Activated T-helper 2 cell treated with anti-CD3 and anti-CD28 coated beads, Interferon-gamma antibody, Interleukin-2, Interleukin-4, amounts not matched to agents 10 μg/mL and 5 μg/mL and 100 μg/mL, durations not matched to agents 14 hours and 24 hours and 36 hours (primary cell): ENCODE measurements at regions of chr6 and their contacts with region 1.

Region 1: GRCh38 chr6:146857180-146857979 is 258.6 kb downstream of the ADGB start:
- DNase-seq: peak; percentile 63
- H3K4me3 Mint-ChIP-seq: no peak overlapping the region
- H3K27ac Mint-ChIP-seq: peak overlapping the region; percentile 72
- H3K4me1 Mint-ChIP-seq: peaks cover 34% of the 10 kb centered on the region
- H3K27me3 Mint-ChIP-seq: no peaks in the 10 kb centered on the region

Region 2: GRCh38 chr6:146803601-146804000 is 53.8 kb before region 1 on chr6:
- intact Hi-C with region 1: no loop called
- DNase-seq: no peak
- H3K4me3 Mint-ChIP-seq: no peak overlapping the region
- H3K27ac Mint-ChIP-seq: no peak overlapping the region
- H3K4me1 Mint-ChIP-seq: peaks cover 4% of the 10 kb centered on the region
- H3K27me3 Mint-ChIP-seq: no peaks in the 10 kb centered on the region

Region 3: GRCh38 chr6:146876271-146877151 is 19.1 kb after region 1 on chr6:
- intact Hi-C with region 1: loop called (anchors 1 kb)
- DNase-seq: no peak
- H3K4me3 Mint-ChIP-seq: no peak overlapping the region
- H3K27ac Mint-ChIP-seq: peak overlapping the region; percentile 85
- H3K4me1 Mint-ChIP-seq: peaks cover 27% of the 10 kb centered on the region
- H3K27me3 Mint-ChIP-seq: no peaks in the 10 kb centered on the region

Region 4: DNA sequence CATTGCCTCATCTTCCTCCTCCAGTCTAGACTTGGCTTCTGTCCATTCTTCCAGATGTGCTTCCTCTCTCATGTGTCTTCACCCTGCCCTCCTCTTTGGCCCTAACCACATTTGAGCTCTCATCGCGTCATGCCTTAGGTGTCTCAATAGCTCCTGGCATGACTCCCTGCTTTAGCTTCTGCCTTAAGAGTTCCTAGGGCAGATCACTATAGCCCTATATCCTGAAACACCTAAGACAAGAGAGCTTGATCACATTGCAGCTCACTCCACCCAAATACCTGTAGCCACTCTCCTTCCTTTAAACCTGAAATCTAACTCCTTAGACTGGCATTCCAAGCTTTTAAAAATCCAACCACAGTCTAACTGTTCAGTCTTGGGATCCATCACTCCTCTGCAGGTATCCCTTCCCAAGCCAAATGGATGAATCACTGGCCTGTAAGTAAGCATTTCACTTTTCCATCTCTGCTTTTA is 277.9 kb after region 1 on chr6:
- intact Hi-C with region 1: loop called (anchors 10 kb)
- DNase-seq: no peak
- H3K4me3 Mint-ChIP-seq: no peak overlapping the region
- H3K27ac Mint-ChIP-seq: no peak overlapping the region
- H3K4me1 Mint-ChIP-seq: peaks cover 14% of the 10 kb centered on the region
- H3K27me3 Mint-ChIP-seq: no peaks in the 10 kb centered on the region

Region 5: GRCh38 chr6:147268254-147268653 is 410.9 kb after region 1 on chr6:
- intact Hi-C with region 1: loop called (anchors 1 kb)
- DNase-seq: no peak
- H3K4me3 Mint-ChIP-seq: no peak overlapping the region
- H3K27ac Mint-ChIP-seq: peak overlapping the region; percentile 77
- H3K4me1 Mint-ChIP-seq: peaks cover 15% of the 10 kb centered on the region
- H3K27me3 Mint-ChIP-seq: no peaks in the 10 kb centered on the region

Region 6: DNA sequence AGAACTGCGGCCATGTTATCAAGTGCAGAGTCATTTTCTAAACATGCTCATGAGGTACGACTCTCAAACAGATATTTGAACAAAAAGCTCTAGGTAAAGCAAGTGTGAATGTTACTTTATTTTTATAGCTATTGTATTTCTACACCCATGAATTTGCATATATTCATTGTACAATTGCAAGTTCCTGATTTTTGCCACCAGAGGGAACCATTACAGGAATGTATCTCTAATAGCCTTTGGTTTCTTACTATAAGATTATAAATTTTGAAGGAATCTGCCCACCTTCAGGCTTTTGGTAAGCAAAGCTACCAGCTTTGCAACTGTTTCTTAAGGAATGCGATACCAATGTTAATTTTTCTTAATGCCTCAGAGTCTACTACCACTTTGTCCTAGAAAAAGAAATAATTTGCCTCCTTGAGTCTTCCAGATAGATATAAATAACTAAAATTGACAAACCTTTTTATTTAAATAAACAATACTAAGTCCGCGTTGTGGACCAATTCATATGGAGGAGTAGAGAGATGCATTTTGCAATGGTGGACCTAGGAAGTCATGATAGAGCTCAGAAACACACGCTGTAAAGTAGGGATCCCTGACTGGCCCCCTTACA is 525.7 kb after region 1 on chr6:
- intact Hi-C with region 1: loop called (anchors 2 kb)
- DNase-seq: no peak
- H3K4me3 Mint-ChIP-seq: no peak overlapping the region
- H3K27ac Mint-ChIP-seq: no peak overlapping the region
- H3K4me1 Mint-ChIP-seq: peaks cover 13% of the 10 kb centered on the region
- H3K27me3 Mint-ChIP-seq: no peaks in the 10 kb centered on the region

Region 7: DNA sequence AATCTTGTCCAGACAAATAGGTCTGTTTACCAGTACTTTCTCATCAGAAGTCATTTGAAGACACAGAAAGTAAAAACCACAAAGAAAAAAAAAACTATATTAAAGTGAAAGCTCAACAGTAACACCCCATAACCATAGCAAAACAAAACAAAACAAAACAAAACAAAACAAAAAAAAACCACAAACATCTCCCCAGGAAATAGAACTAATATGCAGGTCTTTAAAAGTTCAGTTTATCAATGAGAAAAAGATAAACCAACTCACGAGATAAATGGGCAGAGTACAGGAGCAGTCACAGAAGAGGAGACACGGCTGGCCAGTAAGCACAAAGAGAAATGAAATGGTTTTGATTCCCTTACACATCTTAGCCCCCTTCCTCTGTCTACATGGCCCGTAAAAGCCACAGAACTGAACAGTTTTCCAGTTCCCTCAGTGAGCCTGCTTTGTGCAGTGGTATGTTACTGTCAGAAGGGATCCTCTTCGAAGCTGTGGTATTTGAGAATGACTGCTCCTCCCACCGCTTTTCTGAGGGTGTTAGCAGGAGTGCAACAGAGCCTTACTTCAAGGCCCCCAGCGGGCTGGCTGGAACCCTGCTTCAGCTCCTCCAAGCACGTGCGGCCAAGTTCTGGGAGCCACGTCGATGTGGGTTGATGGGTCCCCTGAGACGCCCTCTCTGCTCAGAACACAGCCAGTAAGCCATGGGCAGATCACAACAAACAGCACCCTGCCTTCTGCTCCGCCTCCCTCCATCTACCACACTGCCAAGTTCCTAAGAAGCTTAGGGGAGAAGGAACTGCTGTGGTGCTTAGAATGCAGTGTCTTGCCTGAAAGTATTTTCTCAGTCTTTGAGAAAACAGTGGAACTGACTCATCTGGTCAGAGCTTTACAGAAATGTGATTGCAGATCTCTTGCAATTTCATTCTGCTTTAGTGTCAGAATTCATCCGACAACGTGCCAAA is 1903.5 kb after region 1 on chr6:
- intact Hi-C with region 1: loop called (anchors 10 kb)
- DNase-seq: peak; percentile 40
- H3K4me3 Mint-ChIP-seq: peak overlapping the region; percentile 73
- H3K27ac Mint-ChIP-seq: peak overlapping the region; percentile 81
- H3K4me1 Mint-ChIP-seq: peaks cover 53% of the 10 kb centered on the region
- H3K27me3 Mint-ChIP-seq: peaks cover 53% of the 10 kb centered on the region